ENCODE measurements at regions of chr15 and their contacts with region 1.

Region 1: GRCh38 chr15:68431792-68432401 is at the start of gene ITGA11:
- DNase-seq: no peak
- H3K4me3 ChIP-seq: peak within 1 kb of the TSS; percentile 96
- CTCF ChIP-seq: no peak

Region 2: DNA sequence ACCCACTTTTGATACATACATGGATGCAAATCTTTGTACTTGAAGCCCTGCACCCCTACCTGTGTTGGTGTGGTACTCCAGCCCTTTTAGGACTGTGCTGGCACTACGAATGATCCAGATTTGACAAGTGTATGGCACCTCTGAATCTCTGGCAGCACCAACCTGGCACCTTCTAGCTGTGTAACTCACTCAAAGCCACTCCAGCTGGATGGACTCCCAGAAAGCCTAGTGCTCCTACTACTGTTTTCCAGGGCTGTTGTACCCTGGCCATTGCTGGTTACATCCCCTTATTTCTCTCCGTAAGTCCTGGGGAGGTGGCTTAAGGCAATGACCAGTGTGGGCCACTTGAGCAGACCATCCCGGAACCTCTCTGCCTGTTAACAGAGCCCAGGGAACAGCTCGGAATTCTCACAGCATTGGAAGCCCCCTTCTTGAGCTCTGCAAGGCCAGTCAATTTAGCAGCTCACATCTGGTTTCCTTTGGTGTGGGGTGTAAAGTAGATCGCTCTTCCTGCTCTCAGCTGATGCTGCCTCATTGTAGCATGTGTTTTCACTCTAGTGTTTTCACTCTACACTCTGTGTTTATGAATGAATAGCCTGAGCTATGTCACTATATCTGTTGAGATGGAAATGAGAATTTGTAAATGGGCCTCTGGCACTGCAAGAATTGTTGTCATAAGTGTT is 239.0 kb before region 1 on chr15:
- CTCF ChIA-PET with region 1: no interaction called
- POLR2A ChIA-PET with region 1: no interaction called
- DNase-seq: no peak
- H3K4me3 ChIP-seq: no peak overlapping the region
- CTCF ChIP-seq: no peak

Region 3: GRCh38 chr15:68298882-68299381 is 133.0 kb before region 1 on chr15:
- CTCF ChIA-PET with region 1: no interaction called
- POLR2A ChIA-PET with region 1: no interaction called
- DNase-seq: no peak
- H3K4me3 ChIP-seq: no peak overlapping the region
- CTCF ChIP-seq: no peak

Region 4: GRCh38 chr15:68407042-68407885 is 24.6 kb before region 1 on chr15:
- CTCF ChIA-PET with region 1: no interaction called
- POLR2A ChIA-PET with region 1: no interaction called
- DNase-seq: no peak
- H3K4me3 ChIP-seq: no peak overlapping the region
- CTCF ChIP-seq: no peak

Region 5: GRCh38 chr15:68469162-68470048 is 37.5 kb after region 1 on chr15:
- CTCF ChIA-PET with region 1: interaction called, 4 read pairs
- POLR2A ChIA-PET with region 1: interaction called, 10 read pairs
- DNase-seq: no peak
- H3K4me3 ChIP-seq: no peak overlapping the region
- CTCF ChIP-seq: no peak

Region 6: DNA sequence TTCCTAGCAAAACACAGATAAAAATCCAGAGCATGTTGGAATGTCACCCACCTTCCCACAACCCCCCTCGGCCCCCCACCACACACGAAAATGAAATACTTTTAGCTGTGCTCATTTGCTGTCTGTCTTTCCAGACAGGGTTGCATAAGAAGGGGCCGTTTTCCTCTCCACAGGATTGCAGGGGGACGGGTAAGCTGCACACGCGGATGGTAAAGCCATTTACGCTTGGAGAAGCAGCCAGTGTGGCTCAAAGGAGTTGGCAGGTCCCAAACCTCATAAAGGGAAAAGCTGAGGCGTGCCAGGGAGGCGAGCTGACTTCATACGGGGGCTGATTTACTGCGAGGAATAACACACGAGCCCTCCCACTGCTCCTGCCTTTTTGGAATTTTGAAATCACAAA is 47.5 kb after region 1 on chr15:
- CTCF ChIA-PET with region 1: no interaction called
- POLR2A ChIA-PET with region 1: interaction called, 22 read pairs
- DNase-seq: peak; percentile 97
- H3K4me3 ChIP-seq: no peak overlapping the region
- CTCF ChIP-seq: no peak

Region 7: DNA sequence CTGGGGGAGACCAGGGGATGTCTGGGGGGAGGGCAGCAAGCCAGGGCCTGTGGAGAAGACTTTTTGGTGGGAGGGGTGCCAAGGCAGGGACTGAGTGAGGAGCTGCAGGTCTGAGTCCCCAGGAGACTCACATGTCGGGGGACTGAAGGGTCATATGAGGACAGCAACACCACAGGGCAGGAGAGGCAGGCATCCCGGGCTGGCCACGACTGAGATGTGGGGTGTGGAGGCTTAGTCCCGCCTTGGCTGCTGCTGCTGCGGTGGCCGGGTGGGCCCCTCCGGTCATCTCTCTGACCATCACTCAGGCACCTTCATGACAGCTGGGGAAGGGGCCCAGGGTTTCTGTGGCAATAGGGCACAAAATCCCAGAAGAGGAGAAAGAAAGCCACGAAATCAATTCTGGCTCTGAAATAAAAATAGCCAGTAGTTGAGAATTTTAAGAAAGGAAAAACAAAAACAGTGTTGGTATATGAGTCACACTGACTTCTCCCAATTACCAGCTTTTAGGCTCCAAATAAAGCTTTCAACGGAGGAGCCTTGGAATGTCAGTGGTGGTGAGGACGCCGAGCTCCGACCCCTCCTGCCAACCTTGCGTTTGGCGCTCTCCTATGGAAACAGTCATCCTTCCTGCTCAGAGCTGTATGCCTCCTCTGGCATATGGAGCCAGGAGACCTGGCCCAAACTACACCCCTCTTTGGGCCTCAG is 53.0 kb after region 1 on chr15:
- CTCF ChIA-PET with region 1: no interaction called
- POLR2A ChIA-PET with region 1: interaction called, 22 read pairs
- DNase-seq: peak; percentile 71
- H3K4me3 ChIP-seq: peak overlapping the region; percentile 18; the same call in 1 of the 2 replicates
- CTCF ChIP-seq: no peak